ENCODE measurements at regions of chr20 and their contacts with region 1.

Region 1: DNA sequence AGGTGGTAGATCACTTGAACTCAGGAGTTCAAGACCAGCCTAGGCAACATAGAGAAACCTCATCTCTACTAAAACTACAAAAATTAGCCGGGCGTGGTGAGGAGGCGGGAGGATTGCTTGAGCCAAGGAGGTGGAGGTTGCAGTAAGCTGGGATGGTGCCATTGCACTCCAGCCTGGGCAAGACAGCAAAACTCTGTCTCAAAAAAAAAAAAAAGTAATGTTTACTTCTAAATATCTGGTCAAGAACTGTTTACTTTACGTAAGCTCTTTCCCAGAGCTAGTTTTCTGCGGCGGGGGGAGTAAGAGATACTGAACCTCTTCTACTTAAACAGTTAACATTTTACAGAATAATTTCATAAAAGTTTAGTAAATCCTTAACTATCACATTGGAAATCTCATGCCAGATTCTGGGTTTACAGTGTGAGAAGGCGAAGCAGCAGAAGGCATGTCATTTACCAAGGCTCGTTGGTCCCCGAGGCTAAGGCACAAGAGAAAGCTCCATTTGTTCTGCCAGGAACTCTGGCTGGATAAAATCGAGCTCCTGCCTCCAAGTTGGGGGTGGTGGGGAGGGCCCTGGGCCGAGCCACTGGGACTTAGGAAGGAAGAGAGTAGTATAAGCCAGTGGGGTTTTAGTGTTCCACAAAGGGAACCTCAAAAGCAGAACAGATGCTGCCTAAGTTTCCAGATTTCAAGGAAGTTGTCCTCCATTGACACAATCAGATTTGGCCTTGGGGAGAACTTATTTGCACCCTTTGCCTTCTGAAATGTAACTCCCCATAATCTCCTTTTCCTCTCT is 41.7 kb downstream of the ARFGEF2 start:
- DNase-seq: no peak
- H3K27ac ChIP-seq: no peak overlapping the region
- CTCF ChIP-seq: no peak

Region 2: DNA sequence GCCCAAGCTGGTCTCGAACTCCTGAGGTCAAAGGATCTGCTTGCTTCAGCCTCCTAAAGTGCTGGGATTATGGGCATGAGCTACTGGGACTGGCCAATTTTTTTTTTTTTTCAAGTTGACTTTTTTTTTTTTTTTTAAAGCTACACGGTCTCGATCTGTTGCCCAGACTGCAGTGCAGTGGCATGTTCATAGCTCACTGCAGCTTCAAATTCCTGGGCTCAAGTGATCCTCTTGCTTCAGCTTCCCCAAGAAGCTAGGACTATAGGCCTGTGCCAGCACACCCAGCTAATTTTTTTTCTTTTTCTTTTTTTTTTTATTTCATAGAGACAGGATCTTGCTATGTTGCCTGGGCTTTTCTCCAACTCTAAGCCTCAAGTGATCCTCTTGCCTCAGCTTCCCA is 1402.0 kb before region 1 on chr20:
- CTCF ChIA-PET with region 1: no interaction called
- POLR2A ChIA-PET with region 1: interaction called, 13 read pairs
- DNase-seq: no peak
- H3K27ac ChIP-seq: no peak overlapping the region
- CTCF ChIP-seq: no peak

Region 3: DNA sequence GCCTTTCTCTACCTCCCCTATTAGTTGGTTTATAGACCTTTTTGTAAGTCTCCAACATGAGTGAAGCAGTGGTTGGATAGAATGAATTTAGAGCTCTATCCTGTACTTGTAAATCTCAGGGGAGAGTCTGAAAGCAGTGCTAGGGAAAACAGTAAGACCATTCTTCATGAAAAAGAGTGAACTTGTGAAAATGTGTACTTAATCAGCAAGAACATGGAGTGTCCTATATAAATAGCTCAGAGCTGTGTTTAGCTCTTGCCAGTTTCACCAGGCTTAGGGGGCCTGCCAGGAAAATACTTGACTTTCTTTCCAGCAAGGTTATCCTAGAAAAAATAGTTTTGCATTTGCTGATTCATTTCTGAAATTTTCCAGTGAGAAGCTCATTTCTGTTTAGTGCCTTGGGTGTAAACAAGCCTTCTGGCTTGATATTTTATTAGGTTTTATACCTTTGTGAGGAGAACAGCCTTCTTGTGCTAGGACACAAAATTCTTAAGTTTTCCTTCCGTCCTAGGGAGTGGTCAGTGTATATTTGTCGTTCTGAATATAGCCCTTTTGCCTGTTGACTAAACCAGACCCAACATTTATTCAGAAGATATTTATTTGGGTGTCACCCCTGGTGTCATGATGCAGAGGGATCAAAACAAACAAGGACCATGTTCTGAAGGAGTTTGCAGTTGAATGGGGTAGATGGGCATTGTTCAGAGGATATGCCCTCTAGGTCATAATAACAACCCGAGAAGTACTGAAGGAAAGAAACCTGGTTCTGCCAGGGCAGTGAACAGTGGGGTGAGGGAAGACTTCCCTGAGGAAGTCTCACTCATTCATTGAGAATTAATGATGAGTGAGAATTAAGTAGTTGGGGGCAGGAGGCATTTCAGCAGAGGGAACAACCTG is 34.1 kb before region 1 on chr20:
- CTCF ChIA-PET with region 1: no interaction called
- POLR2A ChIA-PET with region 1: no interaction called
- DNase-seq: no peak
- H3K27ac ChIP-seq: no peak overlapping the region
- CTCF ChIP-seq: no peak

Region 4: GRCh38 chr20:48999890-49000870 is 37.0 kb after region 1 on chr20:
- CTCF ChIA-PET with region 1: no interaction called
- POLR2A ChIA-PET with region 1: no interaction called
- DNase-seq: peak; percentile 26
- H3K27ac ChIP-seq: no peak overlapping the region
- CTCF ChIP-seq: no peak